Activated naive CD4-positive, alpha-beta T cell treated with anti-CD3 and anti-CD28 coated beads for 36 hours (primary cell): ENCODE measurements at regions of chr9 and their contacts with region 1.

Region 1: GRCh38 chr9:100322954-100323536 is 29.7 kb downstream of the TEX10 start:
- DNase-seq: peak; percentile 52
- H3K4me3 Mint-ChIP-seq: no peak overlapping the region
- H3K27ac Mint-ChIP-seq: no peak overlapping the region
- H3K4me1 Mint-ChIP-seq: peaks cover 12% of the 10 kb centered on the region
- H3K27me3 Mint-ChIP-seq: no peaks in the 10 kb centered on the region

Region 2: GRCh38 chr9:99162759-99163364 is 1160.2 kb before region 1 on chr9:
- CTCF ChIA-PET with region 1: no interaction called
- intact Hi-C with region 1: loop called (anchors 5 kb)
- DNase-seq: no peak
- H3K4me3 Mint-ChIP-seq: no peak overlapping the region
- H3K27ac Mint-ChIP-seq: no peak overlapping the region
- H3K4me1 Mint-ChIP-seq: peaks cover 15% of the 10 kb centered on the region
- H3K27me3 Mint-ChIP-seq: peaks cover 12% of the 10 kb centered on the region

Region 3: DNA sequence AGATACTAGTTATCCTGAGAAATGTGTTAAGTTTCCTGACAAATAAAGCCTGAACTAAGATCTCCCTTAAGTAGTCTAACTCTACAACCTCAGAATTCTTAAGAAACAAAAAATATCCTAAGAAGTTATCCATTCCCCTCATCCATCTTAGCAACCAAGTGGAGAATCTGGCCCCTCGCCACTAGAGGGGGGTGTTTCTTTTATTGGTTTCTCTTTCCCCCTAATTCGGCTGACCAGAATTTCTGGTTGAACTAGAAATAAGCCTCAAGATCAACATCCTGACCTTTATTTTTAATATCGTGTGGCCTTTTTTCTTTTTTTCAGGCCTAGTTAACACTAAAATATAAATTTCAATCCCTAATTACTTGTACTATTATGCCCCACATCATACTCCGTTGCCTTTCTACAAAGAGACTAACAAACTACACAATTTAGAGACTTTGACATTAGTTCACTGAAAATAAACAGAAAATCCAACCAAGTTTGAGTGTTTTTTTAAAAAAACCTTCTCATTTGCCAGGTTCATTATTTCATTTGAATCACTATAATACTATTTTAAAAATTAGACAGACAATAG is 515.7 kb before region 1 on chr9:
- CTCF ChIA-PET with region 1: interaction called, 3 read pairs
- intact Hi-C with region 1: loop called (anchors 2 kb)
- DNase-seq: peak; percentile 79
- H3K4me3 Mint-ChIP-seq: no peak overlapping the region
- H3K27ac Mint-ChIP-seq: no peak overlapping the region
- H3K4me1 Mint-ChIP-seq: peaks cover 21% of the 10 kb centered on the region
- H3K27me3 Mint-ChIP-seq: no peaks in the 10 kb centered on the region

Region 4: GRCh38 chr9:100028201-100028784 is 294.8 kb before region 1 on chr9:
- CTCF ChIA-PET with region 1: interaction called, 6 read pairs
- intact Hi-C with region 1: loop called (anchors 1 kb)
- DNase-seq: peak; percentile 84
- H3K4me3 Mint-ChIP-seq: no peak overlapping the region
- H3K27ac Mint-ChIP-seq: no peak overlapping the region
- H3K4me1 Mint-ChIP-seq: peaks cover 3% of the 10 kb centered on the region
- H3K27me3 Mint-ChIP-seq: no peaks in the 10 kb centered on the region

Region 5: DNA sequence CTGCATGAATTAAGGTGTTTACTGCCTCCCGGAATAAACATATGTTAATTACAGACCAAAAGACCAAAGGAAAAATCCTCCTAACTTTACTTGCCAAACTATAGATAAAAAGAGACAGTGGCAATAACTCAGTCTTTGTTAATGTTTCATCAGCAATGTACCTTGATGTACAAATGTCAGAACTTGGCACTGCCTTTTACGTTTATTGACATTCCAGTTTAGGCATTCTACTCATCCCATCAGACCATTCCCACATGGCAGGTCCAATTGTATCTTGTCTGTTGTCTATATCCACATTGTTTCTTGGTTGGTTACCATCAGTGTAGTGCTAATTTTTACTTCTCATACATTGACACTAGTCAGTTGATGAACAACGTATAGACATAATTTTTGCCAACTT is 55.8 kb before region 1 on chr9:
- CTCF ChIA-PET with region 1: no interaction called
- intact Hi-C with region 1: no loop called
- DNase-seq: no peak
- H3K4me3 Mint-ChIP-seq: no peak overlapping the region
- H3K27ac Mint-ChIP-seq: no peak overlapping the region
- H3K4me1 Mint-ChIP-seq: no peaks in the 10 kb centered on the region
- H3K27me3 Mint-ChIP-seq: no peaks in the 10 kb centered on the region

Region 6: GRCh38 chr9:100298378-100298777 is 24.7 kb before region 1 on chr9:
- CTCF ChIA-PET with region 1: interaction called, 11 read pairs
- intact Hi-C with region 1: no loop called
- DNase-seq: no peak
- H3K4me3 Mint-ChIP-seq: no peak overlapping the region
- H3K27ac Mint-ChIP-seq: no peak overlapping the region
- H3K4me1 Mint-ChIP-seq: no peaks in the 10 kb centered on the region
- H3K27me3 Mint-ChIP-seq: no peaks in the 10 kb centered on the region